ENCODE measurements at regions of chr11 and their contacts with region 1.

Region 1: DNA sequence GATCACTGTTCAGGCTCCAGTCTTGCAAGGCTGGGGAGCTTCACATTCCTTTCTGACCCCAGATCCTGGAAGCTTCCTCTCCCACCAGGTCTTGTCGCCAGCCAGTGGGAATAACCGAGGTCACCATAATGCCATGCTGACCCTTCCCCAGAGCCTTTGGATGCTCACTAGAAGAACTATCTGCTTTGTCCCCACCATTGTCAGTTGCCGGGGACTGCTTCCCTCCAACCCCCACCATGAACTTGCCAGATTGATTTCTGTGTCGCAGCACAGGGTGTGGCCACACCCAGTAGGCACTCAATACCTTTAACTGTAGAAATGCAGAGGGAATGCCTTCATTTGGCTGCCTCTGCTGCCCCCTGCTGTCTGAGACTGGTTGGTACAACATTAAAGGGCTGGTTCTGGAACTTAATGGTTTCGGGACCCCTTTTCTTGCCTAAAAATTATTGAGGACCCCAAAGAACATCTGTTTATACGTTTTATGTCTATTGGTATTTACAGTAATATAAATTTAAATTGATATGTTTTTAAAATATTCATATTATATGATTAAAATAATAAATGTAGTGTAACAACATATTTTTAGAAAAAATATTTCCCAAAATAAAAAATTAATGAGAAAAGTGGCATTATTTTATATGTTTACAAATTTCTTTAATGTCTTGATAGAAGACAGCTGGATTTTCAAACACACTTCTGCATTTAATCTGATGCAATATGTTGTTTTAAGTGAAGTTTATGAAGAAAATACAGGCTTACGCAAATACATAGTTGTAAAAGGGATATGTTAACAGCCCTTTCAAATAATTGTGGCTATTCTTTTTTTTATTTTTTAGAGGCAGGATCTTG is 6.7 kb upstream of the GDPD5 start:
- DNase-seq: peak; percentile 93
- ATAC-seq: peak; percentile 52
- H3K4me3 ChIP-seq: no peak overlapping the region; the same call in 1 of the 2 replicates
- H3K27ac ChIP-seq: no peak overlapping the region
- H3K4me1 ChIP-seq: peaks cover 33% of the 10 kb centered on the region
- H3K27me3 ChIP-seq: no peaks in the 10 kb centered on the region
- CTCF ChIP-seq: peak; percentile 93

Region 2: DNA sequence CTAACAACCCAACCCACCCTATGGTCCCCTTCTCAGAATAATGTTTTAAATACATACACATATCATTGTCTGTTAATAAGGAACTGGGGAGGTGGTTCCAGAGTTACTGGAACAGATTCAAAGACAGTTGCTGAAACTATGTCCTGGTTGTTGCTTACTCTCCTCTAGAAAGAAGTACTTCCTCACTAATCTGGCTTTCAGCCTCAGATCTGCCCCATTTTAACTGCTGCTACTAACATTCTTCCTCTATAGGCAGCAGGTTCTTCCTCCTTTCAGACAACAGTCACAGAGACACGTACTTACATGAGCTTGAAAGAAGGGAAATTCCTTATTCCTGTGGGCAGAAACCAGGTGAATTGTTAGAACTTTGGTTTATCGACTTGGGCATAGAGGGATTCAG is 551.8 kb before region 1 on chr11:
- CTCF ChIA-PET with region 1: no interaction called
- POLR2A ChIA-PET with region 1: no interaction called
- intact Hi-C with region 1: no loop called
- DNase-seq: no peak
- ATAC-seq: no peak
- H3K4me3 ChIP-seq: no peak overlapping the region
- H3K27ac ChIP-seq: no peak overlapping the region
- H3K4me1 ChIP-seq: no peaks in the 10 kb centered on the region
- H3K27me3 ChIP-seq: no peaks in the 10 kb centered on the region
- CTCF ChIP-seq: no peak

Region 3: DNA sequence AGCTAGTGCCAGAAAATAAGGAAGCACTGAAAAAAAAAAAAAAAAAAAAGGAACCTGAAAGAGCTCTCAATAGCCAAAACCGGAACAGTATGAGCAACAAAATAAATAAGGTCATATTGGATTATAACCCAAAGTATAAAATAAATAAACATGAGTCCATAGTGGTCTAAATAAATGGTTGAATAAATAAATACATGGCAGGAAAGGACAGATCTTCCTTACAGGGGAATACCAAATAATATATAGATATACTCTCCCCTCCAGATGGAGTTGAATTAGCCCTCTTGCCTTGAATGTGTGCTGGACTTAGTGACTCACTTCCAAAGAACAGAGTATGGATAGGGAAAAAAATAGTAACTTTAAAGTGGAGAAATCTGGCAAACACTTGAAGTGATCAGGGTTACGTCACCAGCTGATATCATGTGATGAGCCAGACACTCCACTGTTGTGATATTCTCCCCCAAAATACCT is 166.7 kb before region 1 on chr11:
- CTCF ChIA-PET with region 1: interaction called, 12 read pairs
- POLR2A ChIA-PET with region 1: no interaction called
- intact Hi-C with region 1: no loop called
- DNase-seq: peak; percentile 58
- ATAC-seq: peak; percentile 82
- H3K4me3 ChIP-seq: no peak overlapping the region
- H3K27ac ChIP-seq: peak overlapping the region; percentile 30
- H3K4me1 ChIP-seq: peaks cover 17% of the 10 kb centered on the region
- H3K27me3 ChIP-seq: no peaks in the 10 kb centered on the region
- CTCF ChIP-seq: no peak

Region 4: GRCh38 chr11:75445315-75445953 is 87.0 kb before region 1 on chr11:
- CTCF ChIA-PET with region 1: interaction called, 4 read pairs
- POLR2A ChIA-PET with region 1: no interaction called
- intact Hi-C with region 1: loop called (anchors 1 kb)
- DNase-seq: peak; percentile 88
- ATAC-seq: peak; percentile 85
- H3K4me3 ChIP-seq: no peak overlapping the region
- H3K27ac ChIP-seq: no peak overlapping the region
- H3K4me1 ChIP-seq: no peaks in the 10 kb centered on the region
- H3K27me3 ChIP-seq: no peaks in the 10 kb centered on the region
- CTCF ChIP-seq: peak; percentile 99

Region 5: GRCh38 chr11:75499449-75500190 is 32.8 kb before region 1 on chr11:
- CTCF ChIA-PET with region 1: no interaction called
- POLR2A ChIA-PET with region 1: interaction called, 5 read pairs
- intact Hi-C with region 1: loop called (anchors 5 kb)
- DNase-seq: peak; percentile 94
- ATAC-seq: peak; percentile 73
- H3K4me3 ChIP-seq: 0 out of 2 replicates have a peak overlapping the region, but pooled peaks have one; percentile 28
- H3K27ac ChIP-seq: peak overlapping the region; percentile 68
- H3K4me1 ChIP-seq: peaks cover 41% of the 10 kb centered on the region
- H3K27me3 ChIP-seq: no peaks in the 10 kb centered on the region
- CTCF ChIP-seq: no peak

Region 6: DNA sequence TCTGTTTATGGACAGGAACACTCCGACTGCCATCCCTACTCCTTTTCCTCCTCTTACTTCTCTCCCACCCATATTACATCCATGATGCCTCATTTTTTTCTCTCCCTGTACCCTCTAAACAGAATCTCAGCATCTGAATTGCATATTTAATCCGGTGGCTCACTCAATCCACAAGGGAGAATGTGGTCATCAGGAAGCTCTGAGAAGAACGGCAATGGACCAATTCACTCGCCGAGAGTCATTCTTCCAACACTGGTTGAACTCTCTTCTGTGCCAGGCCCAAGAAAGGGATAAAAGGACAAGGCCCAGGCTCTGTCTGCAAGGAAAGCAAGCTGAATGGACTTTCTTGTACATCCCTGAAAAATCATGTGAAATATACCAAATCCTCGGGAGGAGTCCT is 120.5 kb after region 1 on chr11:
- CTCF ChIA-PET with region 1: no interaction called
- POLR2A ChIA-PET with region 1: no interaction called
- intact Hi-C with region 1: no loop called
- DNase-seq: peak; percentile 49
- ATAC-seq: peak; percentile 8
- H3K4me3 ChIP-seq: 0 out of 2 replicates have a peak overlapping the region, but pooled peaks have one; percentile 2
- H3K27ac ChIP-seq: peak overlapping the region; percentile 86
- H3K4me1 ChIP-seq: peaks cover 39% of the 10 kb centered on the region
- H3K27me3 ChIP-seq: no peaks in the 10 kb centered on the region
- CTCF ChIP-seq: no peak

Measured in PC-3 (cell line).